Astrocyte of the cerebellum (primary cell): ENCODE measurements at regions of chr12 and their contacts with region 1.

Region 1: DNA sequence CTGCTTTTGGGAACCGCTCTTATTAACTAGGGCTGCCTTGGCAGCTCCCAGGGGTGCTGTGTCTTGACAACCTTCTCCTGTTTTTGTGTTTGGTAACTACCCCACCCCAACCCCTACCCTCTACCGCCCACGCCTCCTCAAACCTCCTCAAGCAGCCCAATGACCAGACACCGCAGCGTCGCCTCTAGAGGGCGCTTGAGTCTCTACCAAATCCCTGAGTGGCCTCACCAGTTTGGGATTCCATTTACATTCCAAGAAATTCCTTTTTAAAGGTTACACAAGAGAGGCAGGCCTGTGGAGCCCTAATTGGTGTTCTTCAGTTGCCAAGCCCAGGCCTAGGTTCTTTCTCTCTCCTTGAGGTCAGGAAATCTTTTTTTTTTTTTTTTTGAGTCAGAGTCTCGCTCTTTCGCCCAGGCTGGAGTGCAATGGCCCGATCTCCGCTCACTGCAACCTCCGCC is 72.3 kb upstream of the USP44 start:
- DNase-seq: peak; percentile 92
- H3K4me3 ChIP-seq: no peak overlapping the region
- CTCF ChIP-seq: peak; percentile 85

Region 2: DNA sequence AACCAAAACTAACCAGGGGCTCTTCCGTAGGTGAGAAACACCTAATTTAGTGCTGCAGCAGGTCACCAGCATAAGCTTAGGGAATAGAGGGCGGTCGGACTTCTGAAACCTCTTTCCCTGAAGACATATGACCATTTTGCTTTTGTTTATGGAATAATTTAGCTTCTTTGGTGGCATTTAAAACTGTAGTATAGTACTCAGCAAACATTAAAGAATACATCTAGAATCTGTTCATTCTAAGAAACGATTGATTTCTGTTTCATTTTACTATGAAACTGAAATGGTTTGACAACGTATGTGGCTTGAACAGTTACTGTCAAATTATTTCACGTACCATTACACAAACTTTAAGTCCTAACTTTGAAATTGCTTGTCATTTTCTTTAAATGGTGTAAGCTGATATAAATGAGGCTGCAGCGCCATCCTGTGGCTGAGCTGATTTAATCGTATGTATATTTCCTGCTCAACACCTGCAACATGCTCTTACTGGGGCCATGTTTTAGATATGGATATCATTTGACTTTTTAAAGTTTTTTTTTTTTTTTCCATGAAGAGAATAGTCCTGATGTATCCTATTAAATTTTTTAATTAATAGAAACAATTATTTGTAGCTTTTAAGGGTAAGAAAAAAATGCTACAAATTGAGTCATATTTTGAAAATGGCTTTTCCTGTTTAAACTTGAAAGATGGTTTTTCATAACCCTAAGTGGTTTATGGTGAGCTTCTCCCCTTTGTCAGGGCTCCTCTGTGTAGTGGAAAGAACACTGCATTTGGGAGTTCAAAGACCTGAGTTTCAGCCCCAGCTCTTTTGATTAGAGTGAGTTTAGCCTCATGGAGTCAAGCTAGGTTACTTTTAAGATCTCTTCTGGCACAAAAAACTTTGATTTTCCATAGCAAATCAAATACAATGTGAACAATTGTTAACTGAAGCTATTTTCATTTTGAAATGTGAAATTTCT is 893.1 kb after region 1 on chr12:
- in situ Hi-C with region 1: loop called (anchors 25 kb)
- DNase-seq: peak; percentile 69
- H3K4me3 ChIP-seq: no peak overlapping the region
- CTCF ChIP-seq: peak; percentile 30